ENCODE measurements at regions of chr7 and their contacts with region 1.

Region 1: DNA sequence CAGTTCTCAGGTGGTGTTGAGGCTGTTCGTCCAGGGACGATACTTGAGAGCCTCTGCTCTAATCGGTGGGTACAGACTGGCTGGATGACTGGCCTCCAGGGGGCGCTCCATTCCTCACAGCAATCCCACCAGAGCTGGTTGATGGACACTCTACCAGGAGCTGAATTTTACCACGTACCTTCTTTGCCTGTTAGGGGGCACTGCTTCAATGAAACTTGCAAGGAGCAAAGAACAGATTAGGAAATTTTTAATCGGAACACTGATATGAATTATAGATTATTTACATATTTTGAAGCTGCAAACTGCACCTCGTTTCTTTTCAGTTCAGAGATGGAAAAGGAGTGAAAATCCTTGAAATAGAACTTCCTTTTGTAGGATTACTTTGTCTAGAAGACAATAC is 44.9 kb downstream of the KBTBD2 start:
- DNase-seq: peak; percentile 71
- CTCF ChIP-seq: peak; percentile 94

Region 2: DNA sequence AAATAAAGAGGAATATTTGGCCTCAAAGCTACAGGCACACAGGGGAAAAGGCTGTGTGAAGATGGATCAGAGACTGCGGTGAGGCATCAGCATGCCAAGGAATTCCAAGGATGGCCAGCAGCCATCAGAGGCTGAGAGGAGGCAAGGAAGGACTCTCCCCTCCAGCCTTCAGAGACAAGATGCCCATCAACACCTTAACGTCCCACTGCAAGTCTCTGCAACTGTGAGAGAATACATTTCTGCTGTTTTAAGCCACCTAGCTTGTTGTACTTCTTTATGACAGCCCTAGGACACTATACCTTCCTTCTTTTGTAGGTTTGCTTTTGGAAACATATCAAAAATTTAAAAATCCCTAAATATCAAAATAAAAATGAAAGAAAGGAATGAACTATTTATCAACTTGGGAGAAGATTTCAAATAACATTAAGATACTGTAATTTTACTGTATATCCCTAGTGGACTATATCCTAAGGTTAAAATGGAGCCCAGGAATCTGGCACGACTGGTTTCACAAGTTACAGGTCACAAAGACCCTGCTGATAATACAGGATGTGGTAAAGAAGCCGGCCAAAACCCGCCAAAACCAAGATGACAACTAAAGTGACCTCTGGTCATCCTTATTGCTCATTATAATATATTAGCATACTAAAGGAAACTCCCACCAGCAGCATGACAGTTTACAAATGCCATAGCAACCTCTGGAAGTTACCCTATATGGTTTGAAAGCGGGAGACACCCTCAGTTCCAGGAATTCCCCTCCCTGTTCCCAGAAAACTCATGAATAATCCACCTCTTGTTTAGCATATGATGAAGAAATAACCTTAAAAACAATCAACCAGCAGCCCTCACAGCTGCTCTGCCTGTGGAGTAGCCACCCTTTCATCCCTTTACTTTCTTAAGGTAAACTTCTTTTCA is 166.2 kb before region 1 on chr7:
- CTCF ChIA-PET with region 1: no interaction called
- POLR2A ChIA-PET with region 1: no interaction called
- DNase-seq: no peak
- CTCF ChIP-seq: no peak

Region 3: DNA sequence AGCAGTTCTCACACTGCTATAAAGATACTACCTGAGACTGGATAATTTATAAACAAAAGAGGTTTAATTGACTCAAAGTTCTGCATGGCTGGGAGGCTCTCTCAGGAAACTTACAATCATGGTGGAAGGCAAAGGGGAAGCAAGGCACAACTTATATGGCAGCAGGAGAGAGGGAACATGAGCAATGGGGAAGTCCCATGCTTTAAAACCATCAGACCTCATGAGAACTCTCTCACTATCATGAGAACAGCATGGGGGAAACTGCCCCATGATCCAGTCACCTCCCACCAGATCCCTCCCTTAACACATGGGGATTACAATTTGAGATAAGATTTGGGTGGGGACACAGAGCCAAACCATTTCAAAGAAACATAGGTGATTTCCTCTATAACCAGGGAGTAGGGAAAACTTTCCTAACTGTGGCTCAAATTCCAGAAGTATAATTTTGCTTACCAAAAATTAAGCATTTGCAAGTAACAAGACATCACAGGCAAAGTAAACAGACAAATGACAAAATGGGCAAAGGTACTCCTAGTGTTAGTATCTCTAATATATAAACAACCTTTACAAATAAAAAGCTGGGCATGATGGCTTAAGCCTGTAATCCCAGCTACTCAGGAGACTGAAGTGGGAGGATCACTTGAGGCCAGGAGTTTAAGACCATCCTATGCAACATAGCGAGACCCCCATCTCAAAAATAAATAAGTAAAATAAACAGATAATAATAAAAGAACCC is 43.1 kb before region 1 on chr7:
- CTCF ChIA-PET with region 1: interaction called, 16 read pairs
- POLR2A ChIA-PET with region 1: no interaction called
- DNase-seq: no peak
- CTCF ChIP-seq: no peak

Region 4: GRCh38 chr7:32879460-32879859 is 32.8 kb after region 1 on chr7:
- CTCF ChIA-PET with region 1: interaction called, 44 read pairs
- POLR2A ChIA-PET with region 1: no interaction called
- DNase-seq: no peak
- CTCF ChIP-seq: no peak

Region 5: DNA sequence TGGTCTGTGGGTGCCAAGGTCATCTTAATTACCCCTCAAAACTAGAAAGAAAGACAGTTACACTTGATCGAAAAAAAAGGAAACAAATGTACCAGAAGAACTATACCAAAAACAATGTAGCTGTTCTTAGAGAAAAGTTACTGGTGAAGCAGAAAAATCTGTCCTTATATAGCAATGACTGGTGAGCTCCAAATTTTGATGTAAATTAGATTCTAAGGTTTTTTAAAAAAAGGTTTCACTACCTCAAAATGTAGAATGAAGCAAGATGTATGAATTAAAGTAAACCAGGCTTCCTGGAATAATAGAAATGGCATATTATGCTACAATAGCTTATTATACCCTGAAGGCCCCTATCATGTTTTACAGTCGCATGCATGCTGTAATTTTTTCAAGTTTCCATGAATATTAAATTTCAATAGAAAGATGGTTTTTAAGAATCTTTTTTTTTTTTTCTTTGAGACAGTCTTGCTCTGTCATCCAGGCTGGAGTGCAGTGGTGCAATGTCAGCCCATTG is 82.1 kb after region 1 on chr7:
- CTCF ChIA-PET with region 1: interaction called, 10 read pairs
- POLR2A ChIA-PET with region 1: no interaction called
- DNase-seq: no peak
- CTCF ChIP-seq: no peak

Region 6: DNA sequence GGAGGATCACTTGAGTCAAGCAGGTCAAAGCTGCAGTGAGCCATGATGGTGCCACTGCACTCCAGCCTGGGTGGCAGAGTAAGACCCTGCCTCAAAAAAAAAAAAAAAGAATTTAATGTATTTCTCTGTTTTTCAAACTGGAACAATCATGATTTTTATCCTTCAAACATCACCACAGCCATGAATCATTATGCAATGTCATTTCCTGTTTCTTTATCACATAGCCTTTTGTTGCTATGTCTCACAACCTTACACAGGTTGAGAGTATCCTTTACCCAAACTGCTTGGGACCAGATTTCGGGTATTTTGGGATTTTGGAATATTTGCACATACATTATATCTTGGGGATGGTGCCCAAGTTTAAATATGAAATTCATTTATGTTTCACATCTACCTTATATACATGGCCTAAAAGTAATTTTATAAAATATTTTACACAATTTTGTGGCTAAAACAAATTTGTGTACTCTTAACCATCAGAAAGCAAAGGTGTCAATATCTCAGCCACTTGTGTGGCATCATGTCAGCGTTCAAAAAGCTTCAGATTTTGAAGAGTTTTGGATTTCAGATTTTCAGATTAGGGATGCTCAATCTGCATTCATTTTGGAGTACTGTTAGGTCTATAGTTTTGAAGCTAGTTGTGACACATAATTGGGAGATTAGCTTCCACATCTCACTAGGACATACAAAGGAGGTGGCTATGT is 207.7 kb after region 1 on chr7:
- CTCF ChIA-PET with region 1: interaction called, 22 read pairs
- POLR2A ChIA-PET with region 1: no interaction called
- DNase-seq: no peak
- CTCF ChIP-seq: no peak

Region 7: DNA sequence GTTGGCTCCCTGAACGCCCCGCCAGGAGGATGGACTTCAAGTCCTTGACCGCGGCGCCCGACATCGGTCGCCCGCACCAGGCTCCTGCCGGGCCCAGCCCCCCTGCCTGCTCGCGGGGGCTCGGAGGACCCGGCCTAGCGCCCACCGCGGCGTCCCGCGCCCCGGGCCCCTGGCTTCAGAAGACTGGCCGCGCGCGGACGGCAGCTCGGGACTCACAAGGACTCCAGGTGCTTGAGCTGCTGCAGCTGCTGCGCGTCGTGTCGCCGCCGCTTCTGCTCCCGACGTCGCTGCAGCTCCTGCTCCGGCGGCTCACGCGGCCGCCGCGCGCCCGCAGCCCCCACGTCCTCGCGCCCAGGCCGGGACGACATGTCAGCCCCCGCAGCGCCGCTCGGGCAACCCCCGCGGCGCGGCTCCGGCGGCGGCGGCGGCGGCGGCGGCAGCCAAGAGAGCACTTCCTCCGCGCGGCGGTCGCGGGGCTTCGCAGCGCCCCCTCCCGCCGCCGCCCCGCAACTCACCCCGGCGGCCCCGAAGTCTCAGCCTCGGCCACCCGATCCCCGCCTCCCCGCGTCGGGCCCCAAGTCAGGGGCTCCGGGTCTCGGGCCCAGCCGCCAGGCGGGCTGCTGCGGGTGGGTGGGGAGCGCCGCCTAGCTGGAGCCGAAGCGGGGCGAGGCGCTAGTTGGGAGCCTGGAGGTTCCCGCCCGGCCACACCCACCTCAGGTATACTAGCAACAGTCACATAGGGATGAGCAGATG is 262.5 kb after region 1 on chr7 and contains the start of gene RP9:
- CTCF ChIA-PET with region 1: interaction called, 74 read pairs
- POLR2A ChIA-PET with region 1: no interaction called
- DNase-seq: peak; percentile 89
- CTCF ChIP-seq: peak; percentile 80